GM12878 (cell line): ENCODE measurements at regions of chrX and their contacts with region 1.

Region 1: GRCh38 chrX:70030301-70030767 is 19.4 kb downstream of the AWAT2 start:
- DNase-seq: no peak
- ATAC-seq: peak; percentile 86
- H3K4me3 ChIP-seq: no peak overlapping the region
- H3K27ac ChIP-seq: no peak overlapping the region
- H3K4me1 ChIP-seq: no peaks in the 10 kb centered on the region
- H3K27me3 ChIP-seq: no peaks in the 10 kb centered on the region
- CTCF ChIP-seq: peak; percentile 70 to 89 (median 81)
- EP300 ChIP-seq: no peak
- POLR2A ChIP-seq: no peak
- RAD21 ChIP-seq: peak; percentile 67

Region 2: DNA sequence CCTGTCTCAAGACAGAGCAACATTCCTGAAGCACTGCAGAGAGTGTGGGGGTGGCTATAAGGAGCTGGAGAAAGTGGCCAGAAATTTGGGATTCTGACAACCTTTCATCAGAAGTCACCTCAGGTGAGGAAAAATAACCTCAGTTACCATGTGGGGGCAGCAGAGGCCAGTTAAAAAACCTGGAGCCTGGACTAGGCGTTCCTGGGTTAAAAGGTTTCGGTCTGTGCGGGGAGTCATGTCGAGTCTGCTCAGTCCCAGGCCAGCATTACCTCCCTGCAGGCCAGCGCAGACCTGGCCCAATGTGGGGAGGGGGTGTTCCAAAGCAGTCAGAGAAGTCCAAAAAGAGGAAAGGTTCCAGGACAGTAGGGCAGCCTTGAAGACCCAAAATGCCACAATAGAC is 537.1 kb before region 1 on chrX:
- CTCF ChIA-PET with region 1: interaction called, 4 read pairs
- POLR2A ChIA-PET with region 1: no interaction called
- RAD21 ChIA-PET with region 1: interaction called, 4 read pairs
- SMC1A ChIA-PET with region 1: no interaction called
- in situ Hi-C with region 1: no loop called
- intact Hi-C with region 1: loop called (anchors 2 kb)
- DNase-seq: no peak
- ATAC-seq: peak; percentile 64
- H3K4me3 ChIP-seq: no peak overlapping the region
- H3K27ac ChIP-seq: no peak overlapping the region
- H3K4me1 ChIP-seq: no peaks in the 10 kb centered on the region
- H3K27me3 ChIP-seq: no peaks in the 10 kb centered on the region
- CTCF ChIP-seq: peak; percentile 28 to 45 (median 38); a peak in 4 of 6 replicates
- EP300 ChIP-seq: no peak
- POLR2A ChIP-seq: no peak
- RAD21 ChIP-seq: peak; percentile 64

Region 3: DNA sequence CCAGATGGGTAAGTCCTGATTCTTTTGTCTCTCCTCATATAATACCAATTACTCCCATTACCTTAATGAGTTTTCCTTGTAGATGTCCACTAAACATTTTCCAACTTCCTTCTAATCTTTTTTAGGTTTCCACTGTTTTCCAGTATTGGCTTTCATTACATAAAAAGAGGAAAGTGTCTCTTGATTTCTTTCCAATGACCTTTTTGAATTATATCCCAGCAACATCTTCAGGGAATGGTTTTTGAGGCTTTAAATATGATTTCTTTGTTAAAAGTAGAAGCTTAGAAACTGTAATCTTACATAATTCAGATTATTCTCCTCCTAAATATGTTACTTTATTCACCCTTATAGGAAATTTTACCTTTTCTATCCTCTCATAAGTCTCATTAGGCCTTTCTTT is 115.6 kb before region 1 on chrX:
- CTCF ChIA-PET with region 1: no interaction called
- POLR2A ChIA-PET with region 1: no interaction called
- RAD21 ChIA-PET with region 1: no interaction called
- SMC1A ChIA-PET with region 1: no interaction called
- in situ Hi-C with region 1: no loop called
- intact Hi-C with region 1: no loop called
- DNase-seq: no peak
- ATAC-seq: no peak
- H3K4me3 ChIP-seq: no peak overlapping the region
- H3K27ac ChIP-seq: no peak overlapping the region
- H3K4me1 ChIP-seq: no peaks in the 10 kb centered on the region
- H3K27me3 ChIP-seq: no peaks in the 10 kb centered on the region
- CTCF ChIP-seq: no peak
- EP300 ChIP-seq: no peak
- POLR2A ChIP-seq: no peak
- RAD21 ChIP-seq: no peak

Region 4: DNA sequence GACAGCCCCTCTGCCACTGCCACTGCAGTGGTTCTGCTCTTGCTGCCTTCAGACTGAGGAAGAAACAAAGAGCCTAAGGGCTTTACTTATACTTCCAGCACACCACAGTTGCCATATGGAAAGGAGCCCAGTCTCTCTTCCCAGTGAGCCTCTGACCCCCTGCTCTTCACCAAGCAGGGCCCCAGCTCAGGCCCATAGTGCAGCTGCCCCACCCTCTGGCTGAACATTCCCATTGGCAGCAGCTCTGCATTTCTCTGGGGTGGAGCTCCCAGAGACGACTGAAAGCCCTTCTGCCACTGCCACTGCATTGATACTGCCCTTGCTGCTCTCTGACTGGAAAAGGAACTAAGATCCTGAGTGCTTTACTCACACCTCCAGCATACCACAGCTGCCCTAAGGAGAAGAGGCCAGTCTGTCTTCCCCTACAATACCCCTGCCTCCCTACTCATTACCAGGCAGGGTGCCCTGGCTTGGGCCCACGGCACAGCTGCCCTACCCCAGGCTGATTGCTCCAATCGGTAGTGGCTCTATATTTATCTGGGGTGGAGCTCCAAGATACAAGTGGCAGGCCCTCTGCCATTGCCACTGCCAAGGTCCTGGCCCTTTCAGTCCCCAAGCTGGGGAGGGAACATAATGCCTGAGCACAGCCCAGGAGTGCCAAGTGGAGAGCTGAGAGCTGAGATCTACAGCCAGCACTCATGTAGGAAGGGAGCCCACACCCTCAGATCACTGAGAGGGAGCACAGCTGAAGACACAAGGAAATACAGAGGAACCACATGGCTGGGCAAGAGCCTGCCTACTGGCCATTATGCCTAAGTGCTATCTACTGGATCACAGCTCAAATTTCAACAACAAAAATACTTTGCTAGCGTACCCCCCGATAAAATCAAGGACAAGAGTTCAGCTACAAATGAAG is 16.6 kb before region 1 on chrX:
- CTCF ChIA-PET with region 1: interaction called, 13 read pairs
- POLR2A ChIA-PET with region 1: no interaction called
- RAD21 ChIA-PET with region 1: no interaction called
- SMC1A ChIA-PET with region 1: interaction called, 3 read pairs
- in situ Hi-C with region 1: no loop called
- intact Hi-C with region 1: no loop called
- DNase-seq: no peak
- ATAC-seq: no peak
- H3K4me3 ChIP-seq: no peak overlapping the region
- H3K27ac ChIP-seq: no peak overlapping the region
- H3K4me1 ChIP-seq: no peaks in the 10 kb centered on the region
- H3K27me3 ChIP-seq: no peaks in the 10 kb centered on the region
- CTCF ChIP-seq: no peak
- EP300 ChIP-seq: no peak
- POLR2A ChIP-seq: no peak
- RAD21 ChIP-seq: no peak

Region 5: GRCh38 chrX:70096052-70096451 is 65.7 kb after region 1 on chrX:
- CTCF ChIA-PET with region 1: interaction called, 66 read pairs
- POLR2A ChIA-PET with region 1: no interaction called
- RAD21 ChIA-PET with region 1: interaction called, 3 read pairs
- SMC1A ChIA-PET with region 1: interaction called, 16 read pairs
- in situ Hi-C with region 1: no loop called
- intact Hi-C with region 1: loop called (anchors 2 kb)
- DNase-seq: no peak
- ATAC-seq: no peak
- H3K4me3 ChIP-seq: no peak overlapping the region
- H3K27ac ChIP-seq: no peak overlapping the region
- H3K4me1 ChIP-seq: no peaks in the 10 kb centered on the region
- H3K27me3 ChIP-seq: no peaks in the 10 kb centered on the region
- CTCF ChIP-seq: 0 out of 6 replicates have a peak, but pooled peaks of 1 of the 3 experiments have one; percentile 9
- EP300 ChIP-seq: no peak
- POLR2A ChIP-seq: no peak
- RAD21 ChIP-seq: no peak

Region 6: DNA sequence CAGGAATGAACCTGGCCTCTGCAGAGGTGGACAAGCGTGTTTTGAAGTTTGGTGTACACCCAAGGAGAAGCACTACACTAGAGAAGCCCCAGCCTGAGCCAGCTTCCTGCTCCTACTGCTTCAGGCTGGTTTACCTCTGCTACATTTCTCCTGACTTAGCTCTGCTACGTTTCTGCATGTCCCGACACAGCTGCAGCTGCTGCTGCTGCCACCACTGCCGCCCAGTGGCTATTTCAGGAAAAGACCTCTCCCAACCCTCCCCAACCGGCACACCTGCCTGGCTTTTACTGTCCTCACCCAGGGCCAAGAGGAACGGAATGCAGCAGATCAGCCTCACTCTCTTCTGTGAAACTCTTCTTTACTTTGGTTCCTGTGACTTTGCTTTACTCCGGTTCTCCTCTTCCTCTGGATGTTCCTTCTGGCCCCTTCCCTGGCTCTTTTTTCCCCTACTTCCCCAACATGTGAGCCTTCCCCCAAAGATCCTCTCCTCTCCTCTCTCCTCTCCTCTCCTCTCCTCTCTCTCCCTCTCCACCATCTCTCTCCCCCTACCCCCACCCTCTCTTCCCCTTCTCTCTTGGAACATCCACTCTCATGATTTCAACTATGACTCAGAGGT is 232.7 kb after region 1 on chrX:
- CTCF ChIA-PET with region 1: interaction called, 3 read pairs
- POLR2A ChIA-PET with region 1: no interaction called
- RAD21 ChIA-PET with region 1: no interaction called
- SMC1A ChIA-PET with region 1: no interaction called
- in situ Hi-C with region 1: no loop called
- intact Hi-C with region 1: loop called (anchors 5 kb)
- DNase-seq: no peak
- ATAC-seq: peak; percentile 95
- H3K4me3 ChIP-seq: no peak overlapping the region
- H3K27ac ChIP-seq: no peak overlapping the region
- H3K4me1 ChIP-seq: no peaks in the 10 kb centered on the region
- H3K27me3 ChIP-seq: no peaks in the 10 kb centered on the region
- CTCF ChIP-seq: peak; percentile 46 to 73 (median 65)
- EP300 ChIP-seq: no peak
- POLR2A ChIP-seq: no peak
- RAD21 ChIP-seq: peak; percentile 49